ENCODE measurements at regions of chr6 and their contacts with region 1.

Region 1: DNA sequence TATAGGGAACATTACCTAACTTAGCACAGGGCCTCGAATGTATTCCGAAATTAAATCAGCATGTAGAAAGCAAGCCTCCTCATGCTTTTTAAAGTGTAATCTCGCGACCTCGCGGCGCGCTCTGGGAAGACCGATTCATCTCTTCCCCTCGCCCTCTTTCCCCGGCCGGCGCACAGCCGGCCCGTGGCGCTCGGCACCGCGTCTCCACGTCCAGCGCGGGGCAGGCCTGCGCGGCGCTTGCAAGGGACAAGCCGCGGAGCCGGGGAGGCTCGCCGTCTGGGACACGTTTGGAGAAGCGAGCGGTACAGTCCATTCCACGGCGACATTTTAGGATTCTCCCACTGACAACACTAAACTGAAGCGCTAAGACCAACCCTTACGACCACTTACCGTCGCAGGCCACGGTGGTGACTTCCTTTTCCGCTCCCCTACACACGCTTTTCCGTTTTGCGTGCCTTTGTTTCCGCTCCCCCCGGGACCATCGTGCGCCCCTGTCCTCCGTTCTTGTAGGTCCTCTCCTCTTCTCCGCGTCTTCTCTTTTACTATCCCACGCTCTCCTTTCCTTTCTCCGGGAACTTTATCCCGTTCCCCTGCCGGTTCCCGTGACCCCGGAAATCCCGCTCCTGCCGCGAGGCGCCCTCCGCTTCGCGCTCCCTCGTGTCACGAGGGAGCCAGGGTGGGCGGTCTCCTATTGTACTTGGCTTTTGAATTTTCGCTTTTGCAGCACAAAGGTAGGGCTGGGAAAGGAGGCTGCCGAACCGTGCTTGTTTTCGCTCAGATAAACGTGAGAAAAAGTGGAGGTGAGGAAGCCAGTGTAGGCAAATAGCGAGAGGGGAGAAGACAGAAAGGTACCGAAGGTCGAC is at the start of gene ECHDC1:
- DNase-seq: peak; percentile 62 to 75
- ATAC-seq: peak; percentile 84 to 92 (median 90)
- H3K4me3 ChIP-seq: peak within 1 kb of the TSS; percentile 82
- H3K27ac ChIP-seq: peak within 1 kb of the TSS; percentile 85
- H3K4me1 ChIP-seq: peaks cover 24% of the 10 kb centered on the region
- H3K27me3 ChIP-seq: no peaks in the 10 kb centered on the region
- CTCF ChIP-seq: peak; percentile 26
- total RNA-seq, gene ECHDC1: 29.9 to 36.9 (median 33.5) TPM

Region 2: GRCh38 chr6:127302728-127303660 is 40.2 kb before region 1 on chr6:
- intact Hi-C with region 1: loop called in 1 of 2 experiments (anchors 5 kb)
- DNase-seq: no peak
- ATAC-seq: peak in 3 of 4 donors; percentile 49 to 68 (median 53)
- H3K4me3 ChIP-seq: no peak overlapping the region
- H3K27ac ChIP-seq: no peak overlapping the region
- H3K4me1 ChIP-seq: peaks cover 14% of the 10 kb centered on the region
- H3K27me3 ChIP-seq: no peaks in the 10 kb centered on the region
- CTCF ChIP-seq: peak; percentile 70

Region 3: DNA sequence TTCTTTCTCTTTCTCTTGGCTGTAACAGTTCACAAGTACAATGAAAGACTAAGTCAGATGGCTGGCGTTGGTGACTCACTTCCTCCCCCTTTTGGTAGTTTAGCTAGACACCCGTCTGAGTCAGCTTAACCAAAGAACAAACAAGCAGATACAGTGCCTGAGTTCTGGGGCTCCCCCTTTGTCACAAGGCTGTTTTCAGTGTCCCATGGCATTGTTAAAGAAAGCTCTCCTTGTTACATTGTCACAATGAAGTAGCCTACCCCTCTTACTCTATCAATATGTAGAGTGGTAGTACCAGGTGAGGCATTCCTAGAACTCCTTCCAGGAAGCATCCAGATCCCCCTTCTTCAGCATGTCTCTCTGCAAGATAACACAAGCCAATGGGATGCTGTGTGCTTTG is 77.4 kb after region 1 on chr6:
- intact Hi-C with region 1: loop called in 1 of 2 experiments (anchors 5 kb)
- DNase-seq: peak in 1 of 2 donors; percentile 25
- ATAC-seq: peak; percentile 90 to 98 (median 98)
- H3K4me3 ChIP-seq: no peak overlapping the region
- H3K27ac ChIP-seq: no peak overlapping the region
- H3K4me1 ChIP-seq: peaks cover 7% of the 10 kb centered on the region
- H3K27me3 ChIP-seq: no peaks in the 10 kb centered on the region
- CTCF ChIP-seq: peak; percentile 33

Region 4: GRCh38 chr6:127459231-127459641 is 116.1 kb after region 1 on chr6 and contains the start of gene KIAA0408:
- intact Hi-C with region 1: loop called (anchors 5 to 10 kb)
- DNase-seq: peak; percentile 52 to 85
- ATAC-seq: peak; percentile 91 to 94 (median 92)
- H3K4me3 ChIP-seq: peak within 1 kb of the TSS; percentile 79
- H3K27ac ChIP-seq: peak within 1 kb of the TSS; percentile 97
- H3K4me1 ChIP-seq: peaks cover 40% of the 10 kb centered on the region
- H3K27me3 ChIP-seq: no peaks in the 10 kb centered on the region
- CTCF ChIP-seq: no peak
- total RNA-seq, gene KIAA0408: 10.4 to 31.5 (median 14.7) TPM

Region 5: DNA sequence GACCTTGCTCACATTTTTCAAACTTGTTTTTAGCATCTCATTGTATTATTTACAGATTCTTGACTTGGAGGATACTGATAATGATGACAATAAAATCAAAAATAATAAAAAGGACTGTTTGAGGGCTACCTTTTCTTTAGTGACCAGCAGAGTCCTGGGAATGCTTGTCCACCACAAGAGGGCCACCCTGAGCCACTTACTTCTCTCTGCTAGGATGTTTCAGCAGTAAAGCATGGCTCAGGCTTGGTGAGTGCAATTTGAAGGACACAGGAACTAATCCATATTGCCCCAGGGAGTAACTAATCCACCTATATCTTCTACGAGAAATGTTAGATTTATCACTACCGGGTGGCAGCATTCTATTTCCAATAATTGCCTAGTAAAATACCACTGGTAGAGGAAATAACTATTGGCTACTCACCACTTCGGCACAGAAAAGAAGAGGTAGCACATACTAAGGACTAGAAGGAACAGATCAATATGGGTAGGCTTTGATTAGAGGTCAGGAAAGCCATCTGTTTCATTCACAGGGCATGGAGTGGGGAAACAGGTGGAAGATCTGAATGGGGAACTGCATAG is 121.8 kb after region 1 on chr6:
- intact Hi-C with region 1: loop called in 1 of 2 experiments (anchors 5 kb)
- DNase-seq: peak; percentile 62 to 77
- ATAC-seq: peak; percentile 80 to 88 (median 88)
- H3K4me3 ChIP-seq: no peak overlapping the region
- H3K27ac ChIP-seq: peak overlapping the region; percentile 97
- H3K4me1 ChIP-seq: peaks cover 33% of the 10 kb centered on the region
- H3K27me3 ChIP-seq: no peaks in the 10 kb centered on the region
- CTCF ChIP-seq: peak; percentile 86